Panc1 (cell line): ENCODE measurements at regions of chr11 and their contacts with region 1.

Region 1: GRCh38 chr11:66700337-66700736 is 22.6 kb upstream of the RBM4B start:
- DNase-seq: no peak
- ATAC-seq: no peak
- H3K4me3 ChIP-seq: no peak overlapping the region
- H3K27ac ChIP-seq: no peak overlapping the region
- H3K4me1 ChIP-seq: no peaks in the 10 kb centered on the region
- H3K27me3 ChIP-seq: no peaks in the 10 kb centered on the region
- CTCF ChIP-seq: no peak

Region 2: DNA sequence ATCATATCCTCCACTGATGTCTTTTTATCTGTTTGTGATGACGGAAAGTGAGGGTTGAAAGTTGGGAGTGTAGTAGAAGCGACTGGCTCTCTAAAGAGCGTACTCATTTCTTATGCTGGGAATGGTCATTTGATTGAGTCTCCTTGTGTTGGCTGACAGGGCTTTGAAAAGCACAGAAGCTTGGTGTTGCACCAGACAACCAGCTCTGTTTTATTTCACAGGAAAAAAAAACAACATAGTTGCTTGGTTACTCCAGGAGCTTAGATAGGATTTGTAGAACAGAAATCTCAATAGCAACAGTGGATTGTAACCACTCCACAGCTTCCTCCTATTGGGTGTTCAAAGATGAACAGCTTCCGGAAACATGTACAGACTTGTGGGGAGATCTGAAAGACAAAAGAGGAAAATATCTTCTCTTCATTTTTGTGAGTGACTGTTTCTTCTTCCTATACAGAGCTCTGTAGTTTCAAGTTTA is 81.2 kb before region 1 on chr11:
- CTCF ChIA-PET with region 1: no interaction called
- POLR2A ChIA-PET with region 1: no interaction called
- in situ Hi-C with region 1: no loop called
- intact Hi-C with region 1: no loop called
- DNase-seq: no peak
- ATAC-seq: no peak
- H3K4me3 ChIP-seq: peak overlapping the region; percentile 84 to 99
- H3K27ac ChIP-seq: peak overlapping the region; percentile 34
- H3K4me1 ChIP-seq: peaks cover 30% of the 10 kb centered on the region
- H3K27me3 ChIP-seq: no peaks in the 10 kb centered on the region
- CTCF ChIP-seq: no peak

Region 3: DNA sequence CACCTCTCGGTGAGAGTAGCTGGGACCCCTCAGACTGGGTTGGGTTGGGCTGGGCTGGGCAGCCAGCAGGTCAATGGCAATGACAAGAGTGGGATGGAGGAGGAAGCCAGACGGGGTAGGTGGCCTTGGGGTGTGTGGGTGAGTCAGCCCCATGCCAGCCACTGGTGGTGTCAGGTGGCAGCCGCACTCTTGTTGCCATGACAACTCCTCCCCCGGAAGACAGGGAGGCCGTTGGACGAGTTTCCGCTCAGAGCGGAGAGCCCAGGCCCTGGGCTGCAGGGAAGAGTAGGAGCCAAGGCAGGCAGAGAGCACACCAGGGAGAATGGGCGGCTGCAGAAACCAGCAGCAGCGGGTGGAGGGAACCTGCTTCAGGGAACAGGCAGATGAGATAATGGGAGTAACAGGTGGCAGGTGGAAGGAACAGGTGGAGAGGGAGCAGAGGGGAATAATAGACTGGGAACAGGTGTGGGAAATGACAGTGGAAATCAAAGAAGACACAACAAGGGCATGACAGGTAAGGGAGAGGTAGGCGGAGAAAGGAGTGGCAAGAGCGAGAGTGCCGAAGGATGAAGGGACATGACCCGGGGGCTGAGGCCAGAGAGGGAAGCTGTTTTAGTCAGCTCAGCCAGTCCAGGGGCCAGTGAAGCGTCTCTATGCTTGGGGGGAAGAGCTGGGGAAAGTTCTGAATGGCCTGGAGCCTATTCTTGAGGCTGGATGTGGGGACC is 20.0 kb after region 1 on chr11:
- CTCF ChIA-PET with region 1: no interaction called
- POLR2A ChIA-PET with region 1: interaction called, 21 read pairs
- in situ Hi-C with region 1: no loop called
- intact Hi-C with region 1: no loop called
- DNase-seq: no peak
- ATAC-seq: 0 out of 2 replicates have a peak, but pooled peaks have one; percentile 18
- H3K4me3 ChIP-seq: no peak overlapping the region
- H3K27ac ChIP-seq: no peak overlapping the region
- H3K4me1 ChIP-seq: no peaks in the 10 kb centered on the region
- H3K27me3 ChIP-seq: no peaks in the 10 kb centered on the region
- CTCF ChIP-seq: no peak